Right ventricle myocardium superior (tissue), 1 donor: ENCODE measurements at regions of chr6 and their contacts with region 1.

Region 1: GRCh38 chr6:98834060-98835031 is at the start of gene POU3F2:
- DNase-seq: peak; percentile 75
- ATAC-seq: peak; percentile 72
- total RNA-seq, gene POU3F2: not detected

Region 2: GRCh38 chr6:98686008-98686601 is 148.2 kb before region 1 on chr6:
- intact Hi-C with region 1: no loop called
- DNase-seq: no peak
- ATAC-seq: no peak

Region 3: DNA sequence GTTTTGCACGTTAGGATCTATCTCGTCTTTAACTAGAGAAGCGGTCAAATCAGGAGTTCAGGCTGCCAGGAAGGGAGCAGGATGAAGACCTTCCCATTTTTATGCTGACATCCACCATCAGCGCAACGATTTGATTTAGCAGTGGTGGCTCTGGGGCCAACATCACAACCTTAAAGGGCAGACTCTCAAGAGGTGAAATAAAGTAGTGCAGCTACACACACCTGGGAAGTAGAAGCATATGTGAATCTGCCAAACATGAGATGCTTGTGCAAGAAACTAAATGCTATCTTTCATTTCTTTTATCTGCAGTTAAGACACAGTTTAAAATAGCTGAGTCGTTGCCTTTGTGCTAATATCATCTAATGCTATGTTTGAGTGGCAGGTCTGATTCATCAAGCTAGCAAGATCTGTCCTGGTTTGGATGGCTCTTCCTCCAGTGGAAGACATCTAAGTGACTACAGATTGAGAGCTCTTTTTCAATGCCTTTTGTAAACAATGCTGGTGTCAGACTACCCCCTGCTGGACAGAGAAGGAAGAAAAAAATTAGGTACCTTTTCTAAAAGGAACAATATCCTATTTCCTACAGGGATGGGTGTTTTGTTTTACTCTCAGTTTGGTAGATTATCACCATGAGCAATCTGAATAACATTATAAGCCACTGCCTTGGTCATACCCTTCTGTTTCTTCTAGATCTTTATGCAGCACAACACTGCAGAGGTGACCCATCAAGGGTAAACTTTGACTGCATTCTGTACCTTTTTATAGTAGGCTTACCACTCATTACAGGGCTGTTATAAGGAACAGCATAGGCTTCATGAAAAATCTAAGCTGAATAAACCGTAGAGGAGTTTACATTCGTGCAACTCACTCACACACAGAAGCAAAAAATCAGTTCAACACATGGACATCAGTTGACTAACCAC is 285.0 kb after region 1 on chr6:
- intact Hi-C with region 1: loop called (anchors 10 kb)
- DNase-seq: no peak
- ATAC-seq: peak; percentile 49